ENCODE measurements at regions of chrX and their contacts with region 1.

Region 1: GRCh38 chrX:115018037-115018647 is 726 bp upstream of the IL13RA2 start:
- DNase-seq: no peak
- ATAC-seq: no peak
- H3K4me3 ChIP-seq: no peak overlapping the region
- H3K27ac ChIP-seq: no peak overlapping the region
- H3K4me1 ChIP-seq: no peaks in the 10 kb centered on the region; the same call in 1 of the 2 replicates
- H3K27me3 ChIP-seq: no peaks in the 10 kb centered on the region
- CTCF ChIP-seq: peak; percentile 41
- POLR2A ChIP-seq: no peak
- RAD21 ChIP-seq: no peak

Region 2: GRCh38 chrX:115134382-115134781 is 116.2 kb after region 1 on chrX:
- CTCF ChIA-PET with region 1: no interaction called
- POLR2A ChIA-PET with region 1: no interaction called
- dilution Hi-C with region 1: no loop called
- in situ Hi-C with region 1: no loop called
- intact Hi-C with region 1: loop called (anchors 5 kb)
- DNase-seq: peak; percentile 2
- ATAC-seq: no peak
- H3K4me3 ChIP-seq: no peak overlapping the region
- H3K27ac ChIP-seq: no peak overlapping the region
- H3K4me1 ChIP-seq: no peaks in the 10 kb centered on the region
- H3K27me3 ChIP-seq: no peaks in the 10 kb centered on the region
- CTCF ChIP-seq: no peak
- POLR2A ChIP-seq: no peak
- RAD21 ChIP-seq: no peak

Region 3: DNA sequence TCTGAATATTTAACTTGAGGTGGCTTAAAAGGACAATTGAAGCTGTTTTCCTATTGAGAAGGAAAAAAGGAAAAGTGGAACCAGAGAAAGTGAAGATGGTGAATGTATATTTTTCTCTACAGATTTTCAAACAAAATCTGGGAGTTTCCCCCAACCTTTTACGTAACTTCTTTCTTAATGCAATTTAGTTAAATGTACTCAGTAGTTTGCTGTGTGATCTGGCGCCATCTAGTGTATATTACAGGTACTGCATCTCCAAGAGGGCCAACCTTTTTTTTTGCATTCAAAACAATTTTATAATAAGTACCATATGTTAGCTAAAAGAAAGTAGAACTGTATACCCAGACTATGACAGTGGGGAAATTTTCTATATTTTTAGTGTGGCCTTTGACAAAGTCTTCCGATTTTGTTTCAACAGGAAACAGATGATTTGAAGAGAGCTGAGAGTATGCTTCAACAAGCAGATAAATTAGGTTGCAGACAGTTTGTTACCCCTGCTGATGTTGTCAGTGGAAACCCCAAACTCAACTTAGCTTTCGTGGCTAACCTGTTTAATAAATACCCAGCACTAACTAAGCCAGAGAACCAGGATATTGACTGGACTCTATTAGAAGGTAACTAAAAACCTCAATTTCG is 624.9 kb after region 1 on chrX:
- CTCF ChIA-PET with region 1: no interaction called
- POLR2A ChIA-PET with region 1: no interaction called
- dilution Hi-C with region 1: no loop called
- in situ Hi-C with region 1: no loop called
- intact Hi-C with region 1: no loop called
- DNase-seq: peak; percentile 77
- ATAC-seq: peak; percentile 85
- H3K4me3 ChIP-seq: no peak overlapping the region
- H3K27ac ChIP-seq: no peak overlapping the region
- H3K4me1 ChIP-seq: no peaks in the 10 kb centered on the region
- H3K27me3 ChIP-seq: peaks cover 2% of the 10 kb centered on the region; the same call in 1 of the 2 replicates
- CTCF ChIP-seq: peak; percentile 94
- POLR2A ChIP-seq: no peak
- RAD21 ChIP-seq: peak; percentile 83